ENCODE measurements at regions of chr4 and their contacts with region 1.

Region 1: DNA sequence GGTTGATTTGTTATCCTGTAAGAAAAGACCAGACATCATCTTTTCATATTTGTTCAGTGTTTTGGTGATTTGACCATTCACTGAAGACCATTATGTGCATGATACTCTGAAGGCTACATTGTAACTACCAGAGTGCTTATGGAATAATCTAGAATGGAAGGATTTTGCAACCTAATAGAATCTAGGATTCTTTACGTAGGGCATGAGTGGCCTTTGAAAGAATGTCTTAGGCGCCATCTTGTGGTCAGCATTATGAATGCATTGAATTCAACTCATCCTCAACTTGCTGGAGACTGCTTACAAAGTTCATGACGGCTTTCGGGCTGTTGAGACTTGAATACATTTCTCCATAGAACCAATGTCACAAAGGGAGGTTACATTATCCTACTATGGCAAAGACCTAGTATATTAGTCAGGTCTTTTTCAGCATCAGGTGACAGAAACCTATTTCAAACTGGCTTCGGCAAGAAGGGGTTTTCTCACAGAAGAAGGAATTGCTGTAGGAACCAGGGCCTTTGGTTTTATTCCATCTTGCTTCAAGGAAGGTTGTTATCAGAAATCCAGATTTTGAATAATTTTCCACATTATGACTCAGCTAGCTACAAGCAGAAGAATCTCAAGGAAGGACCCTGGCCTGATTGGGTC is 104.1 kb downstream of the GPAT3 start:
- DNase-seq: peak; percentile 65
- ATAC-seq: peak; percentile 69
- H3K4me3 Mint-ChIP-seq: no peak overlapping the region
- H3K27ac Mint-ChIP-seq: no peak overlapping the region
- H3K4me1 Mint-ChIP-seq: peaks cover 3% of the 10 kb centered on the region
- H3K27me3 Mint-ChIP-seq: peaks cover 5% of the 10 kb centered on the region

Region 2: DNA sequence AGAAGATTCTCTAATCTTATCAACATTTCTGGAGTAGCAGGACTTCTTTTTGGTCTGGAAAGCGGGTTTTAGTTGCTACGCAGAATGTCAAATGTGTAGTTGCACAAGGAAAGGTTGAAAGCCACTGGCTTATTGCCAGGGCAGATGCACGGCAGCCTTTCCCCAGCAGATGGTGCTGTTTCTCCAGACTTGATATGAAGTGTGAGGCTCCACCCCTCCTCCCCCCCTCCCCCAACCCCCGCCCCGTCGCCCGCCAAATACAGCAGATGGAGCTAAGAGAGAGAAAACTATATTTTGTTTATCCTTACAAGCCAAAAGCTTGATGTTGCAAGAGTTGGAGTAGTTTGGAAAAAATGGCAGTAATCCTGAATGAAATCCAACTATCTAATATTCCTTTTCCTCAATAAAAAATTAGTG is 1177.5 kb before region 1 on chr4:
- CTCF ChIA-PET with region 1: no interaction called
- POLR2A ChIA-PET with region 1: no interaction called
- intact Hi-C with region 1: loop called in 1 of 2 experiments (anchors 10 kb)
- DNase-seq: peak; percentile 93
- ATAC-seq: peak; percentile 95
- H3K4me3 Mint-ChIP-seq: no peak overlapping the region
- H3K27ac Mint-ChIP-seq: no peak overlapping the region
- H3K4me1 Mint-ChIP-seq: peaks cover 9% of the 10 kb centered on the region
- H3K27me3 Mint-ChIP-seq: no peaks in the 10 kb centered on the region

Region 3: DNA sequence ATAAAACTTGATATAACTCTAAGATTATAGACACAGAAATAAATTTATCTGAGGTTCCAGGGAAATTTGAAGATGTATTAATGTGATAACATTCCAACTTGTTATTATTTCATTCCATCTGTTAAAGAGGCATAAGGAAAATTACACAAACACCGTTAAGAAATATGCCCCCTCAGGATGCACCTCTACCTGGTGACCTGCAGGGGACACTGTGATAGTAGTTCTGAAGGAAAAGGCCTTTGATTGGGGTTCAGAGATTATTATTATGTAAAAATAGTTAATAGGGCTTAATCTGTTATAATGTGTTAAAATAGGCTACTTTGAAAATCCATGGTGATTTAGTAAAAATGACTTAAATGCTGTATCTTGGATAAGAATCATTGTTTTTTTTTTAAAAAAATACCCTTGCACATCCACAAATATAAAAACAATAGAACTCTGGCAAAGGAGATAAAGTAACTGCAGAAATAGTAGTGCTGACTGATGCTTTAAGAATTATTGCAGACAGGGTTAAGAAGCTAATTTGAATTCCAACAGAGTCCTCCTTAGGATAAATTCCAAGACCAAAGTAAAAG is 149.0 kb before region 1 on chr4:
- CTCF ChIA-PET with region 1: interaction called, 18 read pairs
- POLR2A ChIA-PET with region 1: no interaction called
- intact Hi-C with region 1: loop called (anchors 1 kb)
- DNase-seq: no peak
- ATAC-seq: peak; percentile 63
- H3K4me3 Mint-ChIP-seq: no peak overlapping the region
- H3K27ac Mint-ChIP-seq: no peak overlapping the region
- H3K4me1 Mint-ChIP-seq: peaks cover 4% of the 10 kb centered on the region
- H3K27me3 Mint-ChIP-seq: no peaks in the 10 kb centered on the region

Region 4: DNA sequence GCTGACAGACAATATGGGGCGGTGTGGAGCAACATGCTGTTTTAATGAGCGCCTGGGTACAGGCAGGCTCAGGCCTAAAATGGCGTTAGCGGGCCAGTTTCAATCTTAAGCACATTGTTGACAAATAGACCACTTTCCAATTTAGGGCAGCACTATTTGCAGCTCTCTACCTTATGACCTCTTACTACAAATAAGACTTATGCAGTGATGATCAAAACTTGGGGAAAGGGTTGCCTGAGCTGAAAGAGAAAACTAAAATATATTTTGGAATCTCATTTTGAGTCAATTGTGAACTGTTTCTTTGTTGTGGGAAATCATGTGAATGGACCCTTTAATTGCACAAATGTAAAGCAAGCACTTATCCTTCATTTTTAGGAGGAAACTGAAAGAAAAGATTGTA is 129.5 kb before region 1 on chr4:
- CTCF ChIA-PET with region 1: interaction called, 29 read pairs
- POLR2A ChIA-PET with region 1: no interaction called
- intact Hi-C with region 1: loop called (anchors 1 kb)
- DNase-seq: no peak
- ATAC-seq: no peak
- H3K4me3 Mint-ChIP-seq: no peak overlapping the region
- H3K27ac Mint-ChIP-seq: no peak overlapping the region
- H3K4me1 Mint-ChIP-seq: no peaks in the 10 kb centered on the region
- H3K27me3 Mint-ChIP-seq: no peaks in the 10 kb centered on the region

Region 5: GRCh38 chr4:84258905-84259830 is 619.2 kb after region 1 on chr4:
- CTCF ChIA-PET with region 1: interaction called, 3 read pairs
- POLR2A ChIA-PET with region 1: no interaction called
- intact Hi-C with region 1: loop called (anchors 1 to 2 kb)
- DNase-seq: no peak
- ATAC-seq: no peak
- H3K4me3 Mint-ChIP-seq: no peak overlapping the region
- H3K27ac Mint-ChIP-seq: no peak overlapping the region
- H3K4me1 Mint-ChIP-seq: no peaks in the 10 kb centered on the region
- H3K27me3 Mint-ChIP-seq: peaks cover 2% of the 10 kb centered on the region

Region 6: GRCh38 chr4:84529169-84529751 is 889.3 kb after region 1 on chr4:
- CTCF ChIA-PET with region 1: interaction called, 5 read pairs
- POLR2A ChIA-PET with region 1: no interaction called
- intact Hi-C with region 1: loop called (anchors 1 to 2 kb)
- DNase-seq: no peak
- ATAC-seq: no peak
- H3K4me3 Mint-ChIP-seq: no peak overlapping the region
- H3K27ac Mint-ChIP-seq: no peak overlapping the region
- H3K4me1 Mint-ChIP-seq: no peaks in the 10 kb centered on the region
- H3K27me3 Mint-ChIP-seq: peaks cover 17% of the 10 kb centered on the region

Measured in activated CD4-positive, alpha-beta T cell treated with anti-CD3 and anti-CD28 coated beads for 36 hours (primary cell).